ENCODE measurements at regions of chr11 and their contacts with region 1.

Region 1: DNA sequence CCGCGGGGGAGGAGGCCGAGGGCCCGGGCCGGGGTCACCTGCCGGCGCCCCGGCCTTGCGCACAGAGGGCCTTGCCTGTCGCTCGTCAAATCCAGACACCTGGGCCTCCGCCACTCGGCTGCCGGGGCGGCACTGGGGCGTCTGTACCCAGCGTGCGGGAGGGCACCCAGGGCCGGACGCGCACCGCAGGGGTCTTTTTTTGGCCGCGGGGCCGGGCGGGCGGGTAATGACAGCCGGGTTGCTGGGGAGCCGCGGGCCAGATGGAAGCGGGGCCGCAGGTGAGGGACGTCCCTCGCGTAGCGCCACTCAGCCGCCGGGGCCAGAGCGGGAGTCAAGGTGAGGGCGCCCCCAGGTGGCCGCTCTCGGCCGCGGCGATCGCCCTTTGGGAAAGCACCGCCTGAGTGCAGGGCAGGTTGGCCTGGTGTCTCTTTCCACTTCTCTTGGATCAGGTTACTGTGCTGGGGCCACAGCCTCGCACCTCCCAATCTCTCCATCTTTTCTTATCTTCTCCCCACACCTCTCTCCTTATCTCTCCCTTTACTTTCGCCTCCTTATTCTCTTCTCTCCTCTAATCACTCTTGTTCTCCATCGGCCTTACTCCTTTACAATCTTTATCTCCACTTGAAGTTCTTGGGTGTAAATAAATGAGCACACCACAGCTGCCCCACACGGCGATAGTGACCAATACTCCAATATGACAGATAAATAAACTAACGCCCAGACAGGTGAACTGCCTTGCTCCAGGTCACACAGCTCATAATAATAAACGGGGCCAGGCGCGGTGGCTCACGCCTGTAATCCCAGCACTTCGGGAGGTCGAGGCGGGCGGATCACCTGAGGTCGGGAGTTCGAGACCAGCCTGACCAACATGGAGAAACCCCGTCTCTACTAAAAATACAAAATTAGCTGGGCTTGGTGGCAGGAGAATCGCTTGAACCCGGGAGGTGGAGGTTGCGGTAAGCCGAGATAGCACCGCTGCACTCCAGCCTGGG is 3.7 kb downstream of the PHLDB1 start:
- DNase-seq: peak; percentile 84
- ATAC-seq: peak; percentile 71
- H3K4me3 Mint-ChIP-seq: peak overlapping the region; percentile 30
- H3K27ac Mint-ChIP-seq: no peak overlapping the region
- H3K4me1 Mint-ChIP-seq: peaks cover 24% of the 10 kb centered on the region
- H3K27me3 Mint-ChIP-seq: peaks cover 28% of the 10 kb centered on the region

Region 2: DNA sequence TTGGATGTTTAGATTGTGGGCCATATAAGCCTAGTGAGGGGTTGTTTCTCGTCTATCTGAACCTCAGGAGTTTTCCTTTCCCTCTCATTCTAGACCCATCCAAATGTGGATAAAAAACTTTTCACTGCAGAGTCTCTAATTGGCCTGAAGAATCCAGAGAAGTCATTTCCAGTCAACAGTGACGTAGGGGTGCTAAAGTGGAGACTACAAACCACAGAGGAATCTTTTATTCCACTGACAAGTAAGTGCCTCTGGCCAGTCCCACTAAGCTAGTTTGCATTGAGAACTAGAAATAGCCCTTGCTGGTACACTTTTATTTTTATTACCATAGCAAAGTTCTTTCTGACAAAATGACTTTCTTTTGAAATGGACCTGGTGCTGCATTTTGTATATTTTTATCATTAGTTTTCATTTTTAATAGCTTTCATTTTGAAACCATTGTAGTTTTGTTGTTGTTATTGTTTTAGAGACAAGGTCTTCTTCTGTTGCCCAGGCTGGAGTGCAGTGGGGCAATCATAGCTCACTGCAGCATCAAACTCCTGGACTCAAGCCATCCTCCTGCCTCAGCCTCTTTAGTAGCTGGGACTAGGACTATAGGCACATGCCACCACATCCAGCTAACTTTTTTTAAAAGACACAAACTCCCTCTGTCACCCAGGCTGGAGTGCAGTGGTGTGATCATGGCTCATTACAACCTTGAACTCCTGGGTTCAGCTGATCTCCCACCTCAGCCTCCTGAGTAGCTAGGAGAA is 18.3 kb before region 1 on chr11:
- CTCF ChIA-PET with region 1: interaction called, 75 read pairs
- DNase-seq: no peak
- ATAC-seq: no peak
- H3K4me3 Mint-ChIP-seq: no peak overlapping the region
- H3K27ac Mint-ChIP-seq: no peak overlapping the region
- H3K4me1 Mint-ChIP-seq: peaks cover 22% of the 10 kb centered on the region
- H3K27me3 Mint-ChIP-seq: no peaks in the 10 kb centered on the region

Region 3: DNA sequence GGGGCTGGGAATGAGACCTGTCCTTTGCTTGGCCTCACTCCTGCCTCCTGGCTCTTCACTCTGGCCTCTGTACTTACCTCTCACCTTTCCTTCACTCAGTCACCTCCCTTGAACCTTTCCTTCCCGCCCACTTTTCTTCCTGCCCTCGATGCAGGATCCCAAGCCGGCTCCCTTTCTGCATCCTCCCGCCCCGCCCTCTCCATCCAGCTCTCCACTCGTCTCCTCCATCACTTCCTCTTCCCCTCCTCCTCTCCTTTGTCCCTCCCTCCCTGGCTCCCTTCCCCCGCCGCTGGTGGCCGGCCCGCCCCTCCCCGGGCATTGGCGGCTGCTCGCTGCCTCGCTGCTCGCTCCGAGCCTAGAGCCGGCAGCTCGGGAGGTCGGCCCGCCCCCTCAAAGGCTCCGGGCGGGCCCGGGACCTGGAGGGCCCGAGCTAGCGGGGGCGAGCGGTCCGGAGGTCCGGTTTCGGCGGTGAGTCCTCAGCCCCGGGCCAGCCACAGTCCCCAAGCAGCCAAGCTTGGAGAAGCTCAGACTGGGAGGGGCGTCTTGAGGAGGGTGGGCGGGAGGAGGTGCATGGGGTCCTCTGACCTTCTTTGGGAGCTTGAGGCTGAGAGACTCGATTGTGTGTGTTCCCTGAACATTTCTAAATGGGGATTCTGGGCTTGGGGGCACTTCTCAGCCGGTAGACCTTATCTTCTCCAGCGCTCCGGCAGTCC is 10.1 kb after region 1 on chr11:
- CTCF ChIA-PET with region 1: interaction called, 20 read pairs
- DNase-seq: no peak
- ATAC-seq: peak; percentile 72
- H3K4me3 Mint-ChIP-seq: peak overlapping the region; percentile 31
- H3K27ac Mint-ChIP-seq: no peak overlapping the region
- H3K4me1 Mint-ChIP-seq: peaks cover 6% of the 10 kb centered on the region
- H3K27me3 Mint-ChIP-seq: peaks cover 22% of the 10 kb centered on the region

Region 4: DNA sequence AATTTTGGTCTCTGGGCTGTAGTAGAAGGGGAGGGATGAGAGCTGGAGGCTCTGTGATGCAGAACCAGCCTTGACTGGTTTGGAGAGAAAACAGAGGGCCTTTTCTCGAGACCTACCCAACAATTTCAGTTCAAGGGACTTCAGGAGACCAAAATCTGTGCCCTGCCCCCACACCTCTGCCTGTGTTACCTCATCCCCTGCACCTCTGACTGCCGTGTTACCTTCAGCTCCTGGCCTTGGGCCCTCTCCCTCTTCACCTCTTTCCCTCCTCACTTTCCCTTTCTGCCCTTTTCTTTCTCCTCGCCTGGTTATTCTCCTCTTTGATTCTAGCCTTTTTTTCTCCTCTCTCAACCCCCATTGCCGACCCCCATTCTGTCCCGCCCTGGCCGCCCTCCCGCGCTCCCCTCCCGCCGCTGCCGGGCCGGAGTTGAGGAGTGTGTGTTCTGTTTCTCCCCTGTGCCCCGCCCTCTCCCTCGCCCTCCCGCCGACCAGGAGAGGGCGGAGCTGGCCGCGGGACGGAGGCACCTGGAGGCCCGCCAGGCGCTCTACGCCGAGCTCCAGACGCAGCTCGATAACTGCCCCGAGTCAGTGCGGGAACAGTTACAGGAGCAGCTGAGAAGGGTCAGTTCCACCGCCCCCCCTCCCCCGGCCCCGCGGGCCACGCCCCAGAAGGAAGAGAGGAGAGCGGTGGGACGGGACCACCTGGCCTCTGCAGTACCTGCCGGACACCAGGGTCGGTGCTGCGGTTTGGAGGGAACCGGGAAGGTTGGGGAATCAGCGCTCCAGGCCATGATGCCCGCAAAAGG is 23.5 kb after region 1 on chr11:
- CTCF ChIA-PET with region 1: interaction called, 10 read pairs
- DNase-seq: no peak
- ATAC-seq: peak; percentile 72
- H3K4me3 Mint-ChIP-seq: no peak overlapping the region
- H3K27ac Mint-ChIP-seq: no peak overlapping the region
- H3K4me1 Mint-ChIP-seq: no peaks in the 10 kb centered on the region
- H3K27me3 Mint-ChIP-seq: peaks cover 3% of the 10 kb centered on the region

Region 5: DNA sequence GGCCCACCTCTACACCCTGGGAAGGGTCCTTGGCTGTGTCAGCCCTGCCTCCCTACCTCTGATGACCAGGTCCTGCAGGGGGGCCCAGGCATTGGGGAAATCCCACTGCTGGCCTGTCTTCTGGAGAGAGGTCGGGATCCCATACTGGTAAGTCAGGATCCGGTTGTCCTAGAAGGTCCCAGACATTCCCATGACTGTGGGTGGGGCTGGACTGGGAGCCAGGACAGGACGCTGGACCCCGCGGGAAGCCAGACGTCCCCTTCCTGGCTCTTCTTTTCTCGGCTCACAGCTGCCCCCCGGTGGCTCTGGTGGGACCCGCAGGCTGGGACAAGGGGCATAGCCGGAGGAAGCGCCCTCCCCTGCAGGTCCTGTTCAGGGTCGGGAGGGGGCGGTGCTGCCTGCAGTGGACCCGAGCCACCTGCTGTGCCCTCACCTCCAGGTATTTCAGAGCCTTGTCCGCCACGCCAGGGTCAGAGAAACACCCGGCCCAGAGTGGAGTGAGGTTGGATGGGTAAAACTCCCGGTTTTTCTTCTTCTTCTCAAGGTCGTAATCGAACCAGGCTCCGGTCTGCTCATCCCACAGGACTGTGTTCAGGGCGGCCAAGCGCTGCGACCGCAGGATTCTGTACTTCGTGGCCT is 48.3 kb after region 1 on chr11:
- CTCF ChIA-PET with region 1: interaction called, 11 read pairs
- DNase-seq: peak; percentile 94
- ATAC-seq: peak; percentile 97
- H3K4me3 Mint-ChIP-seq: no peak overlapping the region
- H3K27ac Mint-ChIP-seq: no peak overlapping the region
- H3K4me1 Mint-ChIP-seq: no peaks in the 10 kb centered on the region
- H3K27me3 Mint-ChIP-seq: no peaks in the 10 kb centered on the region

Region 6: GRCh38 chr11:118757876-118758399 is 146.8 kb after region 1 on chr11:
- CTCF ChIA-PET with region 1: no interaction called
- DNase-seq: no peak
- ATAC-seq: no peak
- H3K4me3 Mint-ChIP-seq: no peak overlapping the region
- H3K27ac Mint-ChIP-seq: no peak overlapping the region
- H3K4me1 Mint-ChIP-seq: peaks cover 3% of the 10 kb centered on the region
- H3K27me3 Mint-ChIP-seq: no peaks in the 10 kb centered on the region